Activated T-helper 1 cell treated with anti-CD3 and anti-CD28 coated beads, Interleukin-12 subunit alpha, Interleukin-12 subunit beta, Interleukin-2, Interleukin-4 antibody, amounts not matched to agents 30 ng/mL and 10 ng/mL and 1 ng/mL, durations not matched to agents 14 hours and 24 hours and 36 hours (primary cell): ENCODE measurements at regions of chr18 and their contacts with region 1.

Region 1: GRCh38 chr18:21704603-21705364 is at the start of gene ABHD3:
- DNase-seq: peak; percentile 91
- H3K4me3 Mint-ChIP-seq: peak within 1 kb of the TSS; percentile 96
- H3K27ac Mint-ChIP-seq: peak within 1 kb of the TSS; percentile 90
- H3K4me1 Mint-ChIP-seq: peaks cover 34% of the 10 kb centered on the region
- H3K27me3 Mint-ChIP-seq: no peaks in the 10 kb centered on the region
- total RNA-seq, gene ABHD3: 29.2 and 36.0 TPM in 2 replicates

Region 2: DNA sequence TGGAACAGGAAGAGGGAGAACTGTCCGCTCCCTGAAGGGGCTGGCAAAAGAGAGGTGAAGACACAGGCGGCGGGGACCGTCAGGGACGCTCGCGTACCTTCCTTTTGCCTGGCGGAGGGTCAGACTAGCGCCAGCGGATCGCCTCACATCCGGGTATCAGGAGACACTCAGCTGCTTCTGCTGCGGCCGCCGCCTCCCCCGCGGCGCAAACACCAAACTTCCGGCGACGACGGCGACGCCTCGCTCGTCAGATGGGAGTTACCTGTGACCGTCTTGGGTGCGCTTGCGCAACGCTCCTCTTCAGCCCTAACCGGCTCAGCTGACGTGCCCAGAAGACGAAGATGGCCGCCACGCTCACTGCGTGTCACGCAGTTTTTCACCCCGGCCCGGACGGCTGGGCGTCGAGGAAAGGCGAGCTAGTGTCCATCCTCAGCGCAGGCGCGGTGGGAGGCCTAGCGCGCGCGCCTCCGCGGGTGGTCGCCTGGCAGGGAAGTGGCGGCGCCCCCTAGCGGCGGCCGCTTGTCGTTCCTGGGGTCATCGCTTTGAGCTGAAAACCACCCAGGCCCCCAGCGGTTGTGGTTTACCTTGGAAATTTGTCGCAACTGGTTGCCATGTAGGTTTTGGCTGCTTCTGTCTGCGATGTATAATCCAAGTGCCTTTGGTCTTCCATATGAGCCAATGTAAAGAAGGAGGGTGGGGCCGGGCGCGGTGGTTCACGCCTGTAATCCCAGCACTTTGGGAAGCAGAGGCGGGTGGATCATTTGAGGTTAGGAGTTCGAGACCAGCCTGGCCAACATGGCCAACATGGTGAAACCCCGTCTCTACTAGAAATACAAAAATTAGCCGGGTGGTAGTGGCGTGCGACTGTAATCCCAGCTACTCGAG is 104.0 kb before region 1 on chr18 and contains the start of gene ESCO1:
- intact Hi-C with region 1: loop called (anchors 1 kb)
- DNase-seq: peak; percentile 94
- H3K4me3 Mint-ChIP-seq: peak within 1 kb of the TSS; percentile 94
- H3K27ac Mint-ChIP-seq: peak within 1 kb of the TSS; percentile 99
- H3K4me1 Mint-ChIP-seq: peaks cover 20% of the 10 kb centered on the region
- H3K27me3 Mint-ChIP-seq: no peaks in the 10 kb centered on the region
- total RNA-seq, gene ESCO1: 20.7 and 21.5 TPM in 2 replicates

Region 3: GRCh38 chr18:21612125-21612991 is 92.4 kb before region 1 on chr18 and contains the start of gene SNRPD1:
- intact Hi-C with region 1: loop called (anchors 1 kb)
- DNase-seq: peak; percentile 89
- H3K4me3 Mint-ChIP-seq: peak within 1 kb of the TSS; percentile 96
- H3K27ac Mint-ChIP-seq: peak within 1 kb of the TSS; percentile 98
- H3K4me1 Mint-ChIP-seq: peaks cover 18% of the 10 kb centered on the region
- H3K27me3 Mint-ChIP-seq: no peaks in the 10 kb centered on the region
- total RNA-seq, gene SNRPD1: 170 and 173 TPM in 2 replicates

Region 4: GRCh38 chr18:21682371-21683051 is 22.3 kb before region 1 on chr18:
- intact Hi-C with region 1: loop called (anchors 1 kb)
- DNase-seq: peak; percentile 17
- H3K4me3 Mint-ChIP-seq: no peak overlapping the region
- H3K27ac Mint-ChIP-seq: no peak overlapping the region
- H3K4me1 Mint-ChIP-seq: peaks cover 14% of the 10 kb centered on the region
- H3K27me3 Mint-ChIP-seq: no peaks in the 10 kb centered on the region

Region 5: GRCh38 chr18:21740724-21741510 is 36.1 kb after region 1 on chr18 and contains the start of gene MIB1:
- intact Hi-C with region 1: loop called (anchors 1 kb)
- DNase-seq: no peak
- H3K4me3 Mint-ChIP-seq: peak within 1 kb of the TSS; percentile 93
- H3K27ac Mint-ChIP-seq: peak within 1 kb of the TSS; percentile 94
- H3K4me1 Mint-ChIP-seq: peaks cover 45% of the 10 kb centered on the region
- H3K27me3 Mint-ChIP-seq: peaks cover 18% of the 10 kb centered on the region
- total RNA-seq, gene MIB1: 29.8 and 31.7 TPM in 2 replicates

Region 6: DNA sequence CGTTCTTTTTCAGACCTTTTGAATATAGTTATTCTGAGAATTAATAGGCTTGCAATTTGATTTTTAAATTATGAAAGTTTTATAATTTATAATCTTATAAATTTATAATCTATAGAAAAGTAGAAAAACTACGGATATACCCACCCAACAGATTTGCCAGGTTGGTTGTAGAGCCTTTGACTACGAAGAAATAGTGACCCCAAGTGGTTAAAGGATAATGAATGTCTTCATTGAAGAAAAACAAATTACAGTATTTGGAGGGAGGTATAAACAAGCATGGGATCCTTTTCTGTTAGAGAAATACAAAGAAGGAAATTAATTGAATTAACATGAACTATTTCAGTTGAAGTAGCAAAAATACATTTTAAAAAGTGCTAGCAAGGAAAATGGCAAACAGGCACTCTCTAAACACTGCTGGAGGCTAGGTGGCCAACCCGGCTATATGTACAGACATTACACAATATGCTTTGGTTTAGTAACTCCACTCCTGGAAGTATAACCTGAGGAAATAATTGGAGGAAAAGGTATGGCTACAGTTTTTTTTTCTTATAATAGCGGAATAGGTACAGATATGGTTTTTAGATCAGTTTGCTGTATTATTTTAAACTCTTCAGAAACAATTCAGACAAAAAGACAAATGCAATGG is 146.7 kb after region 1 on chr18:
- intact Hi-C with region 1: loop called (anchors 5 kb)
- DNase-seq: no peak
- H3K4me3 Mint-ChIP-seq: no peak overlapping the region
- H3K27ac Mint-ChIP-seq: no peak overlapping the region
- H3K4me1 Mint-ChIP-seq: peaks cover 12% of the 10 kb centered on the region
- H3K27me3 Mint-ChIP-seq: no peaks in the 10 kb centered on the region

Region 7: DNA sequence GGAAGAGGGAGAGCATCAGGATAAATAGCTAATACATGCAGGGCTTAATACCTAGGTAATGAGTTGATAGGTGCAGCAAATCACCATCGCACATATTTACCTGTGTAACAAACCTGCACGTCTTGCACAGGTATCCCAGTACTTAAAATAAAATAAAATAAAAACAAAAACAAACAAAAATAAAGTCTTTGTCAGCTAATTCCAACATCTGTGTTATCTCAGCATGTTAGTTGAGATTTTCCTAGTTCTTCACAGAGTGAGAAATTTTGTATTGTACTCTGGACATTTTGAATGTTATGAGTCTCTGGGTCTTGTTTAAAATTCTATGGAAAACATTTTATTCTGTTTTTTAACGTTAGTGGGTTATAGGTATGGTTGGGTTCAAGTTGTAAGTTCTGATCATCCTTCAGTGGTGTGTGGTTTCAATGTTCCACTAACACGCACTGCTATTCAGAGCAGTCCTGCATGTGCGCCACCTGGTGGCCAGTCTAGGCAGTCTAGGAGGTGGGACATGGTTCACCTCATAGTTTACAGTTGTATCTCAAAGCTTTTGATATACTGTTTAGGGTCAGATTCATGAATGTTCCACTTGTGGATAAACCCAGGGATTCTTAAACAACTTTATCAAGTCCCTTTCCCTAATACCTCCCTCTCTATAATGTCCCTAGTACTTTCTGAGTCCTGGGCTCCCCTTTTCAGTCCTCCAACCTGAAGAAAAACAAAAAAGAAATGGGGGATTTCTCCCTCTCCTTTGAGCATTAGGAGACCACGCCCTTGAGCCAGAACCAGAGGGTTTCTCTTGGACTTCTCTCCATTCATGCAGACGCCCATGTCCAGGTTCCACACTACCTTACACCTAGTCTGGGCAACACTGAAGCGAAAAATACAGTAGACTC is 251.2 kb after region 1 on chr18:
- intact Hi-C with region 1: loop called (anchors 1 kb)
- DNase-seq: peak; percentile 59
- H3K4me3 Mint-ChIP-seq: no peak overlapping the region
- H3K27ac Mint-ChIP-seq: no peak overlapping the region
- H3K4me1 Mint-ChIP-seq: no peaks in the 10 kb centered on the region
- H3K27me3 Mint-ChIP-seq: peaks cover 13% of the 10 kb centered on the region

Region 8: GRCh38 chr18:22494771-22495170 is 790.0 kb after region 1 on chr18:
- intact Hi-C with region 1: no loop called
- DNase-seq: no peak
- H3K4me3 Mint-ChIP-seq: no peak overlapping the region
- H3K27ac Mint-ChIP-seq: no peak overlapping the region
- H3K4me1 Mint-ChIP-seq: no peaks in the 10 kb centered on the region
- H3K27me3 Mint-ChIP-seq: no peaks in the 10 kb centered on the region